ENCODE measurements at regions of chr1 and their contacts with region 1.

Region 1: DNA sequence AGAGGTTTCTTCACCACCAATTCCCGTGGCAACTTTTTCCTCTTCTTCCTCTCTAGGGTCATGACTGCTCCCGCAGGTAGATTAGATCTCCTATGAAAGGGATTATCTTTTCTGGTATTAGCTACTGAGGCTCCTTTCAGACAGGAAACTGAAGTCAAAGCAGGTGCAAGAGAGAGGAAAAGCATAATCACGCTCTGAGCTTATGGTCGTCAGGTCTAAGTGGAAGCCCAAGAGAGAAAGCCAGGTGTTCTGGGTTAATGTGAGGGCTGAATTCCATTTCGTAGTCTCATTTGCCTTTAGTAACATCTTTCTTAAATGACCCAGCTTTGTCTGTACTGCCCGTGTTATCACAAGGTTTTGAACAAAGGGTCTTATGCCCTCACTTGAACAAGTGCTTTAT is 8.3 kb upstream of the MAP3K21 start:
- DNase-seq: no peak
- ATAC-seq: no peak
- H3K4me3 ChIP-seq: no peak overlapping the region
- H3K4me3 Mint-ChIP-seq: no peak overlapping the region
- H3K27ac ChIP-seq: no peak overlapping the region
- H3K27ac Mint-ChIP-seq: no peak overlapping the region
- H3K4me1 ChIP-seq: no peaks in the 10 kb centered on the region
- H3K4me1 Mint-ChIP-seq: no peaks in the 10 kb centered on the region
- H3K27me3 ChIP-seq: no peaks in the 10 kb centered on the region
- H3K27me3 Mint-ChIP-seq: peaks cover 16% of the 10 kb centered on the region
- CTCF ChIP-seq: no peak

Region 2: GRCh38 chr1:232669981-232670747 is 649.1 kb before region 1 on chr1:
- CTCF ChIA-PET with region 1: no interaction called
- POLR2A ChIA-PET with region 1: no interaction called
- intact Hi-C with region 1: no loop called
- DNase-seq: no peak
- ATAC-seq: no peak
- H3K4me3 ChIP-seq: no peak overlapping the region
- H3K4me3 Mint-ChIP-seq: no peak overlapping the region
- H3K27ac ChIP-seq: no peak overlapping the region
- H3K27ac Mint-ChIP-seq: no peak overlapping the region
- H3K4me1 ChIP-seq: no peaks in the 10 kb centered on the region
- H3K4me1 Mint-ChIP-seq: peaks cover 5% of the 10 kb centered on the region
- H3K27me3 ChIP-seq: no peaks in the 10 kb centered on the region
- H3K27me3 Mint-ChIP-seq: peaks cover 7% of the 10 kb centered on the region
- CTCF ChIP-seq: no peak

Region 3: GRCh38 chr1:233364695-233365539 is 45.6 kb after region 1 on chr1:
- CTCF ChIA-PET with region 1: interaction called, 4 read pairs
- POLR2A ChIA-PET with region 1: no interaction called
- intact Hi-C with region 1: loop called in 1 of 2 experiments (anchors 5 kb)
- DNase-seq: peak in 1 of 9 experiments; percentile 17
- ATAC-seq: no peak
- H3K4me3 ChIP-seq: no peak overlapping the region
- H3K4me3 Mint-ChIP-seq: no peak overlapping the region
- H3K27ac ChIP-seq: no peak overlapping the region
- H3K27ac Mint-ChIP-seq: no peak overlapping the region
- H3K4me1 ChIP-seq: no peaks in the 10 kb centered on the region
- H3K4me1 Mint-ChIP-seq: no peaks in the 10 kb centered on the region
- H3K27me3 ChIP-seq: no peaks in the 10 kb centered on the region
- H3K27me3 Mint-ChIP-seq: peaks cover 17% of the 10 kb centered on the region
- CTCF ChIP-seq: peak; percentile 57